Activated T-helper 1 cell treated with anti-CD3 and anti-CD28 coated beads, Interleukin-12 subunit alpha, Interleukin-12 subunit beta, Interleukin-2, Interleukin-4 antibody, amounts not matched to agents 30 ng/mL and 10 ng/mL and 1 ng/mL, durations not matched to agents 14 hours and 24 hours and 36 hours (primary cell): ENCODE measurements at regions of chr14 and their contacts with region 1.

Region 1: DNA sequence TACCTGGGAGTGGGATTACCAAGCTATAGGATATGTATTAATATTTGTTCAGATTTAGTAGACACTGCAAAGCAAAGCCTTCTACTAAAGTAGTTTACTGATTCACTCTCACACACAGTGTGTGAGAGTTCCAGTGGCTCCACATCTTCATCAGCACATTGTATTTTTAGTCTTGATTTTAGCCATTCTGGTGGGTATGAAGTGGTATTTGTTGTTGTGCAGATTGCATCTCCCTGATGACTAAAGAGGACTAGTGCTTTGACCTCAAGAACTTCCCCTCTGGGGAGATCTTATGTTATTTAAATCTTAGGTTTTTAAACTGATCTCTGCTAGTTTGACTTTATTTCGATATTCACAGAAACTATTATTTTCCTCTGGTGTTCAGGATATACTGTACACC is 479.7 kb upstream of the RGS6 start:
- DNase-seq: no peak
- H3K4me3 Mint-ChIP-seq: no peak overlapping the region
- H3K27ac Mint-ChIP-seq: peak overlapping the region; percentile 44
- H3K4me1 Mint-ChIP-seq: peaks cover 34% of the 10 kb centered on the region
- H3K27me3 Mint-ChIP-seq: no peaks in the 10 kb centered on the region

Region 2: DNA sequence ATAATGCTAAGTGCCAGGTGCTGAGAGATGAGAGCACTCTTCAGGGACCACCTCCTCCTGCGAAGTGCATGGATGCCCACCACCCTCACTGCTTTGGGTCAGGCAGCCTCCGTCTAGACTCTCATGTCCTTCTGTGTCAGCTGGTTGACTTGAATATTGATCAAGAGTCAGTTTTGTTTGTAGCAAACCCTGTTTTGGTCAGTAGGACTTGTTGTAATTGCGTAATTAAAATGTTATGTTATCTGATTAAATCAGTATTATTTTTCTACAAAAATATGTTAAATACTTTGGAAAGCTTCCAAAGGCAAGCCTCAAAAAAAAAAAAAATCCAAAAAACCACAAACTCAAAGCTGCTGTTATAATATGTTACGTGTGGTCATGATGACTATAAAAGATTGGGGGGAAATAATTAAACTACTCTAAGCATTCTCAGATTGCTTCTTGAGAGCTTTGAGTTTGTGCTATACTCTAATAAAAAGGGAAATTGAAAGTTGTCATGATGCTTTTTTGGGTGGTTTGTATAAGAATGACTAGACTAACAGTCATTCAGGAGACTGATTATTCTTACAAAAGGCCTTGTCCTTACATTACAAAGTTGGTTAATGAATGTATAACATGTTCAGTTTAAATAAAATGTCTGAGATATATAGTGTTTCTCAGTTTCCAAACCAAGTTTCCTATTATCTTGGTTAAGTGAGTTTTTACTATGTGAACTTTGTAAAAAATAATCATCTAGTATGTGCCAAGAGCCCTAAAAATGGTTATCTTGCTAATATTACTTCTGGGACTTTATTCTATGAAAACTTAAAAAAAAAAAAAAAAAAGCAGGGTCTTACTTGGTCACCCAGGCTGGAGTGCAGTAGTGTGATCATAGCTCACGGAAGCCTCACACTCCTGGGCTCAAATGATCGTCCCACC is 19.8 kb after region 1 on chr14:
- intact Hi-C with region 1: loop called (anchors 2 kb)
- DNase-seq: no peak
- H3K4me3 Mint-ChIP-seq: peak overlapping the region; percentile 6
- H3K27ac Mint-ChIP-seq: peak overlapping the region; percentile 27
- H3K4me1 Mint-ChIP-seq: peaks cover 67% of the 10 kb centered on the region
- H3K27me3 Mint-ChIP-seq: no peaks in the 10 kb centered on the region

Region 3: DNA sequence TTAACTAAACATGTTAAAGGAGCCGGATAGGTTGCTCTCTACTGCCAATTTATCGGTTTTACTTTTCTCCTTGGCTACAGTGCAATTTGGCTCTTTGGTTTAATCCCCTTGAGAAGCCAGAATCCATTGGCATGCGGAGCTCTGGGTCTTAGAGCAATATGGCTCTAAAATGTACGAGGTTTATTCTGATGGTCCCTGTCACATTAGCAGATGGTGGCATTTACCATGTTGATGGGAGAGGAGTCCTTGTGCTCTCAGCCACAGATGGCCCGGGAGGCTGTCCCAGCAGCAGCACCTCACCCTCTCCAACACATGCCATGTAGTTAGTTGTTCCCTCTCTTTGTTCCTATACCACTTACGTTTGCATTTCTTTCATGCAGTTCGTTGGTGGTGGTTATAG is 659.4 kb after region 1 on chr14:
- intact Hi-C with region 1: no loop called
- DNase-seq: no peak
- H3K4me3 Mint-ChIP-seq: no peak overlapping the region
- H3K27ac Mint-ChIP-seq: no peak overlapping the region
- H3K4me1 Mint-ChIP-seq: no peaks in the 10 kb centered on the region
- H3K27me3 Mint-ChIP-seq: peaks cover 21% of the 10 kb centered on the region